Mammary epithelial cell (primary cell): ENCODE measurements at regions of chr19 and their contacts with region 1.

Region 1: GRCh38 chr19:13880059-13881043 is 3.4 kb downstream of the NANOS3 start:
- DNase-seq: peak; percentile 94
- H3K4me3 ChIP-seq: peak overlapping the region in 1 of 3 experiments; percentile 15
- H3K27ac ChIP-seq: peak overlapping the region; percentile 59
- H3K4me1 ChIP-seq: peaks cover 38% of the 10 kb centered on the region
- H3K27me3 ChIP-seq: no peaks in the 10 kb centered on the region
- CTCF ChIP-seq: peak; percentile 95 to 99

Region 2: DNA sequence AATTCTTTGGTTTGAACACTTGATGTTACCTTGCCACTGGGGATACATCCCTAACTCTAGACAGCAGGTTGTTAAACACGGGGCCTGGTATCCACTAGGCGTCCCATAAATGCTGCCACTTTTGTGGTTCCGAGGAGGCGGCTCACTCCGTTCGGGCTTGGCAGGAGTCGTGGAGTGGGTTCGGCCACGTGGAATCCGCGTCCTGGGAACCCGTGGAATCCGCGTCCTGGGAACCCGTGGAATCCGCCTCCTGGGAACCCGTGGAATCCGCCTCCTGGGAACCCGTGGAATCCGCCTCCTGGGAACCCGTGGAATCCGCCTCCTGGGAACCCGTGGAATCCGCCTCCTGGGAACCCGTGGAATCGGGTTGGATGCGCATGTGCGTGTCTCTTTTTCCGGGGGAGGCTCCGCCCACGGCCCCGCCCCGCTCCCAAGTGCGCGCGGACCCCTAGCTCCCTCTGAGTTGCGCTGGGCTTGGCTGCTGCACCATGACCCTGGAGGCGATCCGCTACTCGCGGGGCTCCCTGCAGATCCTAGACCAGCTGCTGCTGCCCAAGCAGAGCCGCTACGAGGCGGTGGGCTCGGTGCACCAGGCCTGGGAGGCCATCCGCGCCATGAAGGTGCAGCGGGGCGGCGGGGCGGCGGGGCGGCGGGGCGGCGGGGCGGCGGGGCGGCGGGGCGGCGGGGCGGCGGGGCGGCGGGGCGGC is 116.1 kb before region 1 on chr19 and contains the start of gene MRI1:
- CTCF ChIA-PET with region 1: no interaction called
- dilution Hi-C with region 1: loop called (anchors 5 kb)
- in situ Hi-C with region 1: no loop called
- intact Hi-C with region 1: no loop called
- DNase-seq: peak; percentile 43
- H3K4me3 ChIP-seq: peak within 1 kb of the TSS; percentile 82 to 99 (median 89)
- H3K27ac ChIP-seq: peak within 1 kb of the TSS; percentile 24
- H3K4me1 ChIP-seq: peaks cover 4% of the 10 kb centered on the region
- H3K27me3 ChIP-seq: no peaks in the 10 kb centered on the region
- CTCF ChIP-seq: peak in 1 of 2 donors; percentile 12
- total RNA-seq, gene MRI1: 29.0 to 36.7 TPM

Region 3: DNA sequence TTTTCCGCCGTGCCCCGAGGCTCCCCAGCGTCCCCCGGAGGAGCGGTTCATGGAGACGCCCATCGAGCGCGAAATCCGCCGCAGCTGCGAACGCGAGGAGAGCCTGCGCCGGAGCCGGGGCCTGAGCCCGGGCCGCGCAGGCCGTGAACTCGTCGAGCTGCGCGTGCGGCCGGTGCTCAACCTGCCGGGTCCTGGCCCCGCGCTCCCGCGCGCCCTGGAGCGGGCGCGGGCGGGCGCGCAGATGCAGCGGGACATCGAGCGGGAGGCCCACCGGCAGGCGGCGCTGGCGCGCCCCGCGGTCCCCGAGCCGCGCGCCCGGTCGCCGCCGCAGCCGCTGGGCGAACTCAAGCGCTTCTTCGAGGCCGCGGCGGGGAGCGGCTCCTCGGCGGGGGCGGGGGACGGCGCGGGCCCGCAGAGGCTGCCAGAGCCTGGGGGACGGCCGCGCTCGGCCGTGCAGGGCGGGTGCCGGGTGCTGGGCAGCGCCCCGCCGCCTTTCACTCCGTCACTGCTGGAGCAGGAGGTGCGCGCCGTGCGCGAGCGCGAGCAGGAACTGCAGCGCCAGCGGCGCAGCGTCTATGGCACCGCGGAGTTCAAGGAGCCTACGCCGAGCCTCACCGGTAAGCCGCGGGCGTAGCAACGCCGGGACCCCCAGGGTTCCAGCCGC is 193.0 kb after region 1 on chr19:
- CTCF ChIA-PET with region 1: interaction called, 4 read pairs
- dilution Hi-C with region 1: loop called (anchors 5 kb)
- in situ Hi-C with region 1: loop called (anchors 5 to 10 kb)
- intact Hi-C with region 1: loop called (anchors 1 kb)
- DNase-seq: peak; percentile 74
- H3K4me3 ChIP-seq: peak overlapping the region; percentile 48 to 84 (median 49)
- H3K27ac ChIP-seq: peak overlapping the region; percentile 29
- H3K4me1 ChIP-seq: peaks cover 26% of the 10 kb centered on the region
- H3K27me3 ChIP-seq: no peaks in the 10 kb centered on the region
- CTCF ChIP-seq: peak in 1 of 2 donors; percentile 38

Region 4: GRCh38 chr19:14198384-14199376 is 318.3 kb after region 1 on chr19:
- CTCF ChIA-PET with region 1: no interaction called
- dilution Hi-C with region 1: no loop called
- in situ Hi-C with region 1: no loop called
- intact Hi-C with region 1: loop called (anchors 5 kb)
- DNase-seq: no peak
- H3K4me3 ChIP-seq: no peak overlapping the region
- H3K27ac ChIP-seq: no peak overlapping the region
- H3K4me1 ChIP-seq: no peaks in the 10 kb centered on the region
- H3K27me3 ChIP-seq: peaks cover 2% of the 10 kb centered on the region
- CTCF ChIP-seq: peak in 1 of 2 donors; percentile 16

Region 5: DNA sequence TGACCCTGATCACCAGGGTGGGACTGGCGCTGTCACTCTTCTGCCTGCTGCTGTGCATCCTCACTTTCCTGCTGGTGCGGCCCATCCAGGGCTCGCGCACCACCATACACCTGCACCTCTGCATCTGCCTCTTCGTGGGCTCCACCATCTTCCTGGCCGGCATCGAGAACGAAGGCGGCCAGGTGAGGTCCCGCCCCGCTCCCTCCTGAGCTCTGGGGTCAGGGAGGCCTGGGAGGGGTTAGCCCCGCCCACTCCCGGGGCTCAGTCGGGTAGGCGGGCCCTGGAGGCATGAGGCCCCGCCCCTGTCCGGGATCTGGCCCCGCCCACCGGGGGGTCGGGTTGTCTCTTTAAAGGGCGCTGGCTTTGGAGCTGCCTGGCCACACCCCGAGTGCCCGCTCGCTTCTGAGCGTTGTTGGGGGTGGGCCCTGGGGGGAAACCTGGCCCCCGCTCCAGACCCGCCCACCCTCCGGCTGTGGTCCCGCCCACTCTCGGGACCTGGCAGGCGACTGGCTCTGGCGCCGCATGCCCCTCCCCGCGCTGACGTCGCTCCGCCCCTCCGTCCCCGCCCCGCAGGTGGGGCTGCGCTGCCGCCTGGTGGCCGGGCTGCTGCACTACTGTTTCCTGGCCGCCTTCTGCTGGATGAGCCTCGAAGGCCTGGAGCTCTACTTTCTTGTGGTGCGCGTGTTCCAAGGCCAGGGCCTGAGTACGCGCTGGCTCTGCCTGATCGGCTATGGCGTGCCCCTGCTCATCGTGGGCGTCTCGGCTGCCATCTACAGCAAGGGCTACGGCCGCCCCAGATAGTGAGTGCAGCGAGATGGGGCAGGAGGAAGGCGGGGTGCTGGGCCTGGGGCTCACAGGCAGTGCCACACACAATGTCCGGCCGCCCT is 525.6 kb after region 1 on chr19:
- CTCF ChIA-PET with region 1: interaction called, 6 read pairs
- dilution Hi-C with region 1: loop called (anchors 5 kb)
- in situ Hi-C with region 1: loop called in 1 of 2 experiments (anchors 25 kb)
- intact Hi-C with region 1: loop called (anchors 1 kb)
- DNase-seq: peak; percentile 63
- H3K4me3 ChIP-seq: peak overlapping the region in 1 of 3 experiments; percentile 38
- H3K27ac ChIP-seq: no peak overlapping the region
- H3K4me1 ChIP-seq: peaks cover 4% of the 10 kb centered on the region
- H3K27me3 ChIP-seq: no peaks in the 10 kb centered on the region
- CTCF ChIP-seq: peak; percentile 44 to 84

Region 6: DNA sequence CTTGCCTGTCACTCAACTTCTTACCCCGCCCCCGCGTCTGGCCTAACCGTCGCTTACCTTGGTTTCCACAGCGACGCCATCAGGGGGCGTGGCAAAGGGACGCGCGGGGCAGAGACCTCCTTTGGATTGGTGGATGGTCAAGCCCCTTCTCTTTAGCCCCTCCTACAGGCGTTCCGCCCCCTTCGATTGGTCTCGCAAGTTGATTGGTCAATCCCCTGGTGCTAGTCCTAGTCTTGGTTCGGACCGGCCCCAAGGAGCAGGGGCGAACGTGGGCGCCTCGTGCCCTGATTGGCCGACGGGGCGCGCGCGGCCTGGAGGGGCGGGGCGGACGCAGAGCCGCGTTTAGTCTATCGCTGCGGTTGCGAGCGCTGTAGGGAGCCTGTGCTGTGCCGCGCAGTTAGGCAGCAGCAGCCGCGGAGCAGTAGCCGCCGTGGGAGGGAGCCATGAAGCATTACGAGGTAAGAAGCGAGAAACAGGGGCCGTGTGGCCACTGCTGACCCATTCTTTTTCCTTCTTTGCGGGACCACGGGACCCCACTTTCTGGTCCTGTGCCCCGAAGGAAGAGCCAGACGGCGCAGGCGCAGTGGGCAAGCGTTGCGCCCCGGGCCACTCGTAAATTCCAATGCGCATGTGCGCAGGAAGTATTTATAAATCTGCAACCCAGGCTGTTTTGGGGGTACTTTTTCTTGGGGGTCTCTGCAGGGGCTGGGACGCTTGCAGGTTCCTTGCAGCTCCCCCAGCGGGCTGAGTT is 649.1 kb after region 1 on chr19 and contains the start of gene TECR:
- CTCF ChIA-PET with region 1: interaction called, 12 read pairs
- dilution Hi-C with region 1: no loop called
- in situ Hi-C with region 1: no loop called
- intact Hi-C with region 1: no loop called
- DNase-seq: peak; percentile 100
- H3K4me3 ChIP-seq: peak within 1 kb of the TSS; percentile 78 to 94 (median 89)
- H3K27ac ChIP-seq: peak within 1 kb of the TSS; percentile 97
- H3K4me1 ChIP-seq: peaks cover 44% of the 10 kb centered on the region
- H3K27me3 ChIP-seq: no peaks in the 10 kb centered on the region
- CTCF ChIP-seq: peak in 1 of 2 donors; percentile 4
- total RNA-seq, gene TECR: 68.0 to 168 TPM